PC-9 (cell line): ENCODE measurements at regions of chr19 and their contacts with region 1.

Region 1: GRCh38 chr19:49590071-49590970 is 661 bp upstream of the PRR12 start:
- DNase-seq: peak; percentile 96 to 99
- H3K4me3 ChIP-seq: peak overlapping the region; percentile 89
- H3K27ac ChIP-seq: peak overlapping the region; percentile 71
- H3K4me1 ChIP-seq: peaks cover 9% of the 10 kb centered on the region; the same call in 1 of the 2 replicates
- H3K27me3 ChIP-seq: no peaks in the 10 kb centered on the region
- CTCF ChIP-seq: no peak; the same call in 1 of the 2 replicates

Region 2: DNA sequence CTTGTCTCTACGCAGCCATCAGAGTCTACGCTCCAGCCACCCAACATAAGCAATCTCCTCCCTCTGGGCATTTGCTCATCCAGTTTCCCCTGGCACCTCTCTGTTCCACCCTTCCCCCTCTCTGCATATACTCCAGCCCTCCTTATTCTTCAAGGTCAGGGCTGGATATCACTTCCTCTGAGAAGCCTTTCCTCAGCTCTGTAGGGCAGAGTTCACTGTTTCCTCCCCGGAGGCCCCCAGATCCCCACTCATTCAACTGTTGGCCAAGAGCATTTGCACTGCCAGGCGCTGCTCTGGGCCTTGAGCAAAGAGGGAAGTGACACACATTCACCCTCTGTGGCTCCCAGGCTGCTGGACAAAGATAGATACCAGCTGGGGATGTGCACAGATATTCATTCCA is 74.6 kb before region 1 on chr19:
- CTCF ChIA-PET with region 1: interaction called, 13 read pairs
- POLR2A ChIA-PET with region 1: no interaction called
- intact Hi-C with region 1: no loop called
- DNase-seq: no peak
- H3K4me3 ChIP-seq: no peak overlapping the region
- H3K27ac ChIP-seq: no peak overlapping the region
- H3K4me1 ChIP-seq: no peaks in the 10 kb centered on the region
- H3K27me3 ChIP-seq: peaks cover 10% of the 10 kb centered on the region; the same call in 1 of the 2 replicates
- CTCF ChIP-seq: no peak

Region 3: DNA sequence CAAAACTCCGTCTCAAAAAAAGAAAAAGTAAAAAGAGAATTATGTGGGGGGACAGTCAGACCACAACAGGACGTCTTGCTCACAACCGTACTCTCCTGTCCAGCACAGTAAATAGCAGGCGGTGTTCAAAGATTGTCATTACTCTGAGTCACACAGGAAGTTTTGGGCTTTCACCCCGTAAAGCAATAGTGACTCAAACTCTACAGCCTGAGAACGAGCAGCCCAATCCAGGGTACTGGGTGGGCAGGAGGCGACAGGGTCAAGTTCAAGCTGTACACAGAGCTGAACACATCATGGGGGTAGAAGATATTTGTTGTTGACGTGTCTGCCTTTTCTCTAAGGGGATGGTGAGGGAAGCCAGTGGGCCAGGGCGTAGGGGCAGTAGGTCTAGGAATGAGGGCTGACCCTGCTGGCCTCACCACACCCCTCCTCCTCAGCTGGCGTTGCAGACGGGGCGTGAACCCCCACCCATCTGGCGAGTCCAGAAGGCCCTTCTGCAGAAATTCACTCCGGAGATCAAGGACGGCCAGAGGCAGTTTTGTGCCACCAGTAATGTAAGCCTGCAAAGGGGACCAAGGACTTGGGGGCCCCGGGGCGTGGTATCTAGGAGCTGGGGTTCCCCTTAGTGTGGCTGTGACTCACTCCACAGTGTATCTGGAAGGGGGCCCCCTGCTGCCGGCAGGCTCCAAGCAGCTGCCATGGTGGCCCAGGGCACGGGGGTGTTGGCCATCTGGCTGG is 23.9 kb after region 1 on chr19:
- CTCF ChIA-PET with region 1: interaction called, 14 read pairs
- POLR2A ChIA-PET with region 1: interaction called, 5 read pairs
- intact Hi-C with region 1: no loop called
- DNase-seq: peak; percentile 50 to 75
- H3K4me3 ChIP-seq: peak overlapping the region; percentile 5; the same call in 1 of the 2 replicates
- H3K27ac ChIP-seq: peak overlapping the region; percentile 84
- H3K4me1 ChIP-seq: peaks cover 33% of the 10 kb centered on the region
- H3K27me3 ChIP-seq: no peaks in the 10 kb centered on the region
- CTCF ChIP-seq: 0 out of 2 replicates have a peak, but pooled peaks have one; percentile 28

Region 4: DNA sequence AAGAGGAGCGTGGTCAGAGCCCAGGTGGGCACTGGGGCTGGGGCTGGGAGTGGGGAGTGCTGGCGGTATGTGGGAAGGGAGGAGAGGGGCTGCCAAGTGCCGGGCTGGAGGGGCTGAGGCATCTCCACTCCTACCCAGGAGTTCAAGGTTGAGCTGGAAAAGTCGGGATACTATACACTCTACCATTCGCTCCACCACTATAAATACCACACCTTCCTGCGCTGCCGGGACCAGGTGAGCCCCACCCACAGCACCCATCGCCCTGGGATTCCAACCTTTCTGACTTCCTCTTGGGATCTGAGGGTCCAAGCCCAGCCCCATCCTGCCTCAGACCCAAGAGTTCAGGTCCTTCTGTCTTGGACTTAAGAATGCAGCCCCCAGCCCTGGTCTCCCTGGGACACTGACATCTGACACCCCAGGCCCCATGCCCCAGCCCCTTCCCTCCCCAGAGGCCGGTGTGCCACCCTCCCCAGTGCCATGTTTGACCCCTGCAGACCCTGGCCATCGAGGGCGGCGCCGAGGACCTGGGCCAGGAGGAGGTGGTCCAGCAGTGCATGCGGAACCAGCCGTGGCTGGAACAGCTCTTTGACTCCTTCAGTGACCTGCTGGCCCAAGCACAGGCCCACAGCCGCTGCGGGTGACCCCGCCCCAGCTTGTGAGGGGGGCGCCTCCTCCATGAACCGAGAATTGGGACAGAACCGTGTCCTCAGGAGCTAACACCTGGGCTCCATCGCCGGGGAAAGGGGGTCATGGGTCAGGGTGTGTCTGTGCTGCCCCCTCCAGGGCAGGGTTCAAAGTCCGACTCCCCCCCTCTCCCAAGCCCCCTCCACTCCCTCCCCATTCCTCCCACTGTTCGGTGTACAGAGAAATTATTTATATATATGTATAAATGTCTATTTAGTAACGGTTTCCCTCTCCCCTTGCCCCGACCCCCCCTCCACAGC is 34.9 kb after region 1 on chr19:
- CTCF ChIA-PET with region 1: interaction called, 6 read pairs
- POLR2A ChIA-PET with region 1: interaction called, 12 read pairs
- intact Hi-C with region 1: no loop called
- DNase-seq: no peak
- H3K4me3 ChIP-seq: no peak overlapping the region
- H3K27ac ChIP-seq: no peak overlapping the region
- H3K4me1 ChIP-seq: no peaks in the 10 kb centered on the region
- H3K27me3 ChIP-seq: no peaks in the 10 kb centered on the region
- CTCF ChIP-seq: no peak

Region 5: DNA sequence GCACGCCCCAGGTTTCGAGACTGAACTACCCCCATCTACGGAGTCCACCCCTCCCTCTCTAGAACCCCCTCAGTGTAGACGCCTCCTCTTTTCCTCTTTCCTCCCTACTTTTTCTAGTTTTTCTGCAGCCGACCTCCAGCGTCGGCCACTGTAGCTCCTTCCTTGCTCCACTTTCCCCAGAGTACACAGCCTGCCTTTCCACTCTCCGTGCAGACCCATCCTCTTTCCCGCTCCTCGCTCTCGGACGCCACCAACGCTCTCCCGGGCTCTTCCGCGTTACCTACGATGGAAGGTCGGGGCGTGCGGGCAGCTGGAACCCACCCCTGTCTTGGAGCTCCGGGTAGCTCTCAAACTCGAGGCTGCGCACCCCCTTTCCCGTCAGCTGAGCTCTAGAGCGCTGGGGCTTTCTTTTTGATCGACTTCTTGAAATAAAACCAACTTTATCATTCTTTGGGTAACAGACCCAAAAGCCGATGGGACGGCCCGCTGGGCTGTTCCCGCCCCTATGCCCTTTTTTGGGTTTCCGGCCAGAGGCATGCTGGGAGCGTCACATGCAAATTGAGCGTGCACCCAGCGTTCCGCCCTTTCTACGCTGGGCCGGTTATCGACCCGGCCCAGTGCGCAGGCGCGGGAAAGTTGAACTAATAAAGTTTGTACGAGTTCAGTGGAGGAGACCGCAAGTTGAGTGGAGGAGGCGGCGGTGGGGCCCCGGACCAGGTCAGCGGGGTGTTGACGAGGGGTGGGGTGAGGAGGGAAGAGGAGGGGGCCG is 75.2 kb after region 1 on chr19 and contains the starts of genes BCL2L12 and IRF3:
- CTCF ChIA-PET with region 1: interaction called, 3 read pairs
- POLR2A ChIA-PET with region 1: interaction called, 9 read pairs
- intact Hi-C with region 1: loop called (anchors 2 kb)
- DNase-seq: peak; percentile 92 to 95
- H3K4me3 ChIP-seq: peak within 1 kb of the TSS; percentile 95
- H3K27ac ChIP-seq: peak within 1 kb of the TSS; percentile 67
- H3K4me1 ChIP-seq: peaks cover 21% of the 10 kb centered on the region
- H3K27me3 ChIP-seq: no peaks in the 10 kb centered on the region
- CTCF ChIP-seq: no peak
- total RNA-seq, gene BCL2L12: 80.3 and 84.8 TPM in 2 replicates
- total RNA-seq, gene IRF3: 181 and 220 TPM in 2 replicates